ENCODE measurements at regions of chr1 and their contacts with region 1.

Region 1: GRCh38 chr1:110766025-110766647 is 91.4 kb upstream of the KCNA3 start:
- DNase-seq: peak; percentile 11 to 86 (median 55)
- ATAC-seq: peak; percentile 87
- H3K4me3 ChIP-seq: no peak overlapping the region
- H3K4me3 Mint-ChIP-seq: no peak overlapping the region
- H3K27ac ChIP-seq: no peak overlapping the region
- H3K27ac Mint-ChIP-seq: no peak overlapping the region
- H3K4me1 ChIP-seq: no peaks in the 10 kb centered on the region
- H3K4me1 Mint-ChIP-seq: peaks cover 2% of the 10 kb centered on the region
- H3K27me3 ChIP-seq: no peaks in the 10 kb centered on the region
- H3K27me3 Mint-ChIP-seq: peaks cover 10% of the 10 kb centered on the region
- CTCF ChIP-seq: peak; percentile 95

Region 2: GRCh38 chr1:108963052-108963686 is 1803.0 kb before region 1 on chr1 and contains the start of gene CLCC1:
- CTCF ChIA-PET with region 1: no interaction called
- POLR2A ChIA-PET with region 1: no interaction called
- intact Hi-C with region 1: no loop called
- DNase-seq: peak; percentile 83 to 96 (median 91)
- ATAC-seq: peak; percentile 87
- H3K4me3 ChIP-seq: peak within 1 kb of the TSS; percentile 57 to 86
- H3K4me3 Mint-ChIP-seq: peak within 1 kb of the TSS; percentile 87
- H3K27ac ChIP-seq: peak within 1 kb of the TSS; percentile 75 to 88
- H3K27ac Mint-ChIP-seq: peak within 1 kb of the TSS; percentile 92
- H3K4me1 ChIP-seq: peaks cover 24% of the 10 kb centered on the region
- H3K4me1 Mint-ChIP-seq: peaks cover 39% of the 10 kb centered on the region
- H3K27me3 ChIP-seq: no peaks in the 10 kb centered on the region
- H3K27me3 Mint-ChIP-seq: no peaks in the 10 kb centered on the region
- CTCF ChIP-seq: no peak
- total RNA-seq, gene CLCC1: 4.6 to 5.8 TPM

Region 3: DNA sequence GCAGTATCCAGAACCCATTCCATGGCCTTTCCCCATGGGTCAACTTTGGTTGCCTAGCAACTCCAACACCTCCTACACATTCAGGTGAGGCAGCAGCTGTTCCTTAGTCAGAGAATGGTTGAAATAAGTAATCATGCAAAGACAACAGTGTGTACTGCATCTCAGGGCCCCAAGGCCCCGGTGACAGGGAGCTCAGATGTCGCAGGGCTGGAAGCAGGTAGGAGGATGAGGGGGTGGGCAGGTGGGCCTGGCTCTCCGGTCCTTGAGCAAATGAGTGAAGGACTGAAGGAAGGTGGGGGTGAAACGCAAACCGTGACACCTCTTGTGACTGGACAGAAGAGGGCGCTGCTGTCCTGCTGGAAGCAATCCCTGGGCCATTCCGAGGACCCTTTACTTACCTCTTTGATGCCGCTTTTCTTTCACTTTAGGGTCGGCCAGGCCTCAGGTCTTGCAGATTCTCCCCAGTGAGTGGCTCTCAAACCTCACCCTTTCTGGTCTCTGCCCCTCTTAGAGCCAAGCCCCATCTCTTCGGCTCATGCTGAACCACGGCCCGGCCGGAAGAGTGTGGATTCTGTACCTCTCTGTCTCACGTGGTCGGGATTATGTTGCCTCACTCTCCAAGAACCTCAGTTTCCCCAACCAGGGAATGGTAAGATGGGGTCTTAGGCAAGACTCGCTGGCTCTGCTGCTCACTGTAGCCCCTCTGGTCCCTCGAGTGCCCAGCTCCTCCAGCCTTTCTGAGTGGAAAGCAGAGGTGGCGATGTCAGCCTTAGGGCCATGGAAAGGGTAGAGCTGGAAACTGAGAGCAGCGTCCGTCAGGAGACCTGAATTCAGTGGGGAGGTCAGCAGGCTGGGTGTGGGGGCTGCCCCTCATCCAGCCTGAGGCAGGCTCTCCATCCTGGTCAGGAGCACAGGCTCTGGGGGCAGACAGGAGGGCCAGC is 241.6 kb before region 1 on chr1:
- CTCF ChIA-PET with region 1: interaction called, 6 read pairs
- POLR2A ChIA-PET with region 1: no interaction called
- intact Hi-C with region 1: loop called in 1 of 2 experiments (anchors 1 kb)
- DNase-seq: peak; percentile 8 to 69 (median 44)
- ATAC-seq: peak; percentile 77
- H3K4me3 ChIP-seq: no peak overlapping the region
- H3K4me3 Mint-ChIP-seq: peak overlapping the region; percentile 22
- H3K27ac ChIP-seq: no peak overlapping the region
- H3K27ac Mint-ChIP-seq: no peak overlapping the region
- H3K4me1 ChIP-seq: peaks cover 6% of the 10 kb centered on the region
- H3K4me1 Mint-ChIP-seq: peaks cover 3% of the 10 kb centered on the region
- H3K27me3 ChIP-seq: no peaks in the 10 kb centered on the region
- H3K27me3 Mint-ChIP-seq: peaks cover 26% of the 10 kb centered on the region
- CTCF ChIP-seq: peak; percentile 64

Region 4: GRCh38 chr1:110594456-110595352 is 171.4 kb before region 1 on chr1:
- CTCF ChIA-PET with region 1: no interaction called
- POLR2A ChIA-PET with region 1: no interaction called
- intact Hi-C with region 1: no loop called
- DNase-seq: no peak
- ATAC-seq: no peak
- H3K4me3 ChIP-seq: no peak overlapping the region
- H3K4me3 Mint-ChIP-seq: no peak overlapping the region
- H3K27ac ChIP-seq: no peak overlapping the region
- H3K27ac Mint-ChIP-seq: no peak overlapping the region
- H3K4me1 ChIP-seq: no peaks in the 10 kb centered on the region
- H3K4me1 Mint-ChIP-seq: peaks cover 2% of the 10 kb centered on the region
- H3K27me3 ChIP-seq: no peaks in the 10 kb centered on the region
- H3K27me3 Mint-ChIP-seq: no peaks in the 10 kb centered on the region
- CTCF ChIP-seq: no peak

Region 5: DNA sequence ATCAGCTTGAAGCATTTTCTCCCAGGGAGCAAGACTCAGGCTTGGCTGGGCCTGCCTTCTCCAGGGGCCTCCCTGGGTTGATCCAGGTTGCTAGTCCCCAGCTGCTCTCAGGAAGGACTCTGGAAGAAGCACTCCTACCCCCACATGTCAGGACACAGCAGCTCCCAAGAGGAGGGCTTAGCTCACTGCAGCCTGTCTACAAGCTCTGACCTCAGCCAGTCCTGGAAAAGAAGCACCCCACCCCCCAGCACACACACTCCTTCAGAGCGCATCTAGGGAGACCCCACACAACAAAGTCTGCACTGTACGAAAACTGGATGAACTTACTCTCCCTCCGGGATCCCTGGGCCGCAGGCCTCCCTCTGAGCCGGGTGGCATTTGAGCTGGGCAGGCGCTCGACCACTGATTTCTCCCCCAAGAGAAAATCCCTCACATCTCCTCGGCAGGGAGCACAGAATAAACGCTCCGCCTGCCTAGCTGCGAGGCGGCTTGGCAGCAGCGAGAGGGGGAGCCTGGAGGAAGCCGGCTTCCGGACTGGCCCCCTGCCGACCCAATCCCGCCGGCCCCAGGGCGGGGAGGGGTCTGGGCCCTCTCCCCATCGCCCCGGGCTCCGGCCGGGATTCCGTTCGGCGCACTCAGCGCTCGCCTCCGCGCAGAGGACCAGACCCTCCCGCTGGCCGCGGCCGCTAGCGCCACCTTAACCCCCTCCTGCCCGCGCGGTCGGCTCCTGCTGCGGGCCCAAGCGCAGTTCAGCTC is 160.1 kb before region 1 on chr1 and contains the start of gene KCNA2:
- CTCF ChIA-PET with region 1: interaction called, 19 read pairs
- POLR2A ChIA-PET with region 1: no interaction called
- intact Hi-C with region 1: no loop called
- DNase-seq: peak in 3 of 9 experiments; percentile 22 to 50 (median 29)
- ATAC-seq: peak; percentile 37
- H3K4me3 ChIP-seq: peak within 1 kb of the TSS; percentile 55 to 68
- H3K4me3 Mint-ChIP-seq: peak within 1 kb of the TSS; percentile 81
- H3K27ac ChIP-seq: no peak within 1 kb of the TSS
- H3K27ac Mint-ChIP-seq: no peak within 1 kb of the TSS
- H3K4me1 ChIP-seq: peaks cover 14% of the 10 kb centered on the region
- H3K4me1 Mint-ChIP-seq: peaks cover 20% of the 10 kb centered on the region
- H3K27me3 ChIP-seq: peaks cover 20 to 25% of the 10 kb centered on the region in 2 experiments
- H3K27me3 Mint-ChIP-seq: peaks cover 54% of the 10 kb centered on the region
- CTCF ChIP-seq: no peak
- total RNA-seq, gene KCNA2: 0.39 to 0.46 TPM

Region 6: GRCh38 chr1:110639724-110640386 is 126.3 kb before region 1 on chr1:
- CTCF ChIA-PET with region 1: interaction called, 122 read pairs
- POLR2A ChIA-PET with region 1: no interaction called
- intact Hi-C with region 1: no loop called
- DNase-seq: no peak
- ATAC-seq: no peak
- H3K4me3 ChIP-seq: no peak overlapping the region
- H3K4me3 Mint-ChIP-seq: no peak overlapping the region
- H3K27ac ChIP-seq: peak overlapping the region in 1 of 2 experiments; percentile 59
- H3K27ac Mint-ChIP-seq: peak overlapping the region; percentile 83
- H3K4me1 ChIP-seq: peaks cover 90% of the 10 kb centered on the region
- H3K4me1 Mint-ChIP-seq: peaks cover 91% of the 10 kb centered on the region
- H3K27me3 ChIP-seq: no peaks in the 10 kb centered on the region
- H3K27me3 Mint-ChIP-seq: no peaks in the 10 kb centered on the region
- CTCF ChIP-seq: no peak

Region 7: DNA sequence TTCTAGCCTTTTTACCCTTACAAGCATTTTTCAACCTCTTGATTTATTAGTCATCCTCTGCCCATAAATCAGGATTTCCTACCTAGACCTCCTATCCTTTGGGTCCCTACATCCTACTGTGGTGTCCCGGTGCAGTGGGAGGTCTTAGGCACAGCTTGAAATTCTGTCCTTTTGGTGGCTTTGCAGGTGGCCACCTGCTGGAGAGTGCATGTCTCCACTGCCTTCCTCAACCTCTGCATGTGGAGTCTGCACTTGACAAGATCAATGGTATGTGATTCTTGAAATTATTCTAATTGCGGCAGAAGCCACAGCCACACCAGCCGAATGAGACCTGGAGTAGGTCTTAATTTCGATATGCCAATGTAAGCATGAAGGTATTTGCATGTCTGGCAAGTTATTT is 79.9 kb before region 1 on chr1:
- CTCF ChIA-PET with region 1: interaction called, 7 read pairs
- POLR2A ChIA-PET with region 1: no interaction called
- intact Hi-C with region 1: loop called in 1 of 2 experiments (anchors 5 kb)
- DNase-seq: peak in 7 of 9 experiments; percentile 10 to 65 (median 36)
- ATAC-seq: peak; percentile 84
- H3K4me3 ChIP-seq: no peak overlapping the region
- H3K4me3 Mint-ChIP-seq: no peak overlapping the region
- H3K27ac ChIP-seq: no peak overlapping the region
- H3K27ac Mint-ChIP-seq: no peak overlapping the region
- H3K4me1 ChIP-seq: no peaks in the 10 kb centered on the region
- H3K4me1 Mint-ChIP-seq: peaks cover 4% of the 10 kb centered on the region
- H3K27me3 ChIP-seq: no peaks in the 10 kb centered on the region
- H3K27me3 Mint-ChIP-seq: no peaks in the 10 kb centered on the region
- CTCF ChIP-seq: peak; percentile 34

Region 8: GRCh38 chr1:110829955-110830553 is 63.9 kb after region 1 on chr1:
- CTCF ChIA-PET with region 1: interaction called, 13 read pairs
- POLR2A ChIA-PET with region 1: no interaction called
- intact Hi-C with region 1: no loop called
- DNase-seq: peak in 6 of 9 experiments; percentile 8 to 73 (median 28)
- ATAC-seq: peak; percentile 97
- H3K4me3 ChIP-seq: no peak overlapping the region
- H3K4me3 Mint-ChIP-seq: no peak overlapping the region
- H3K27ac ChIP-seq: no peak overlapping the region
- H3K27ac Mint-ChIP-seq: no peak overlapping the region
- H3K4me1 ChIP-seq: peaks cover 5% of the 10 kb centered on the region
- H3K4me1 Mint-ChIP-seq: peaks cover 15% of the 10 kb centered on the region
- H3K27me3 ChIP-seq: no peaks in the 10 kb centered on the region
- H3K27me3 Mint-ChIP-seq: no peaks in the 10 kb centered on the region
- CTCF ChIP-seq: peak; percentile 91

Measured in CD8-positive, alpha-beta T cell (primary cell).